HEK293T (cell line): ENCODE measurements at regions of chr1 and their contacts with region 1.

Region 1: GRCh38 chr1:203304919-203305808 is at the start of gene BTG2:
- DNase-seq: peak; percentile 98

Region 2: GRCh38 chr1:203290261-203291089 is 14.7 kb before region 1 on chr1:
- CTCF ChIA-PET with region 1: no interaction called
- POLR2A ChIA-PET with region 1: interaction called, 10 read pairs
- DNase-seq: peak; percentile 87

Region 3: GRCh38 chr1:203320591-203321272 is 15.6 kb after region 1 on chr1:
- CTCF ChIA-PET with region 1: interaction called, 17 read pairs
- POLR2A ChIA-PET with region 1: interaction called, 71 read pairs
- DNase-seq: no peak

Region 4: GRCh38 chr1:203369666-203370065 is 64.5 kb after region 1 on chr1:
- CTCF ChIA-PET with region 1: no interaction called
- POLR2A ChIA-PET with region 1: no interaction called
- DNase-seq: no peak